Activated CD4-positive, alpha-beta memory T cell treated with anti-CD3 and anti-CD28 coated beads, Interleukin-2, amount 10 ng/mL, durations not matched to agents 7 days and 5 days (primary cell): ENCODE measurements at regions of chr1 and their contacts with region 1.

Region 1: GRCh38 chr1:39799770-39800470 is 11.3 kb upstream of the BMP8B start:
- DNase-seq: peak; percentile 72
- H3K4me3 Mint-ChIP-seq: peak overlapping the region; percentile 63
- H3K27ac Mint-ChIP-seq: peak overlapping the region; percentile 80
- H3K4me1 Mint-ChIP-seq: peaks cover 13% of the 10 kb centered on the region
- H3K27me3 Mint-ChIP-seq: no peaks in the 10 kb centered on the region

Region 2: DNA sequence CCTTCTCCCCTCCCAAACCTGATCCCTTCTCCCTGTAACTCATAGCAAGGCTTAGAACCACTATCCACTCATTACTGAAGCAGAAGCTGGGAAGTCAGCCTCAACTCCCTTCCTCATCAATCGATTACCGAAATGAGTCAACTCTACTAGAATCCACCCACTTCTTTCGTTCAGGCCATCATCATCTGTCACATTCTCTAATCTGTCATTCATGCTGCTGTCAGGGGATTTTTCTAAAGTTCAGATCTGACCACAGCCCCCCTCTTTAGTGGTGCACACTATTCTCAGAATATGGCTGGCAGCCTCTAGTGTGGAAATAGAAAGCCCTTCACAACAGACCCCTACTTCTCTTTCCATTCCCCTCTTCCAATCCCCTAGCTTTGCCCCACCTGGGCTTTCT is 133.1 kb before region 1 on chr1:
- CTCF ChIA-PET with region 1: interaction called, 10 read pairs
- POLR2A ChIA-PET with region 1: no interaction called
- DNase-seq: peak; percentile 25
- H3K4me3 Mint-ChIP-seq: no peak overlapping the region
- H3K27ac Mint-ChIP-seq: peak overlapping the region; percentile 4
- H3K4me1 Mint-ChIP-seq: peaks cover 21% of the 10 kb centered on the region
- H3K27me3 Mint-ChIP-seq: peaks cover 19% of the 10 kb centered on the region

Region 3: DNA sequence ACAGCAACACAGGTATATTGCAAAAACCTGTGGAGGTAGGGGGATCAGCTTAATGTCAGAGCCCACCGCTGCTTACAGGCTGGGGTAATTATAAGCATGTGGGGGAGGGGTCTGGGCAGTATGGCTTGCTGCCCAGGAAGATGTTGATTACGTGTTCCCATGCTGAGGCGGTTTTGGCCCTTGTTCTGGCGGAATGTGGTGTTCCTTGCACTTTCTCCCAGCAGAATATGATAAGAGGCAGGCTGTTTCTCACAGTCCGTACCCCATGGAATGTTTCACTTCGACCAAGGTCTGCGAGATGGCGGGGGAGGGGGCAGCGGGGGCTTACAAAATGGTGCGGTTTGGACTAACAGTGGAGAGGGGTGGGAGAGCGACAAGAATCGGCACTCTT is 98.9 kb before region 1 on chr1:
- CTCF ChIA-PET with region 1: interaction called, 33 read pairs
- POLR2A ChIA-PET with region 1: no interaction called
- DNase-seq: no peak
- H3K4me3 Mint-ChIP-seq: no peak overlapping the region
- H3K27ac Mint-ChIP-seq: no peak overlapping the region
- H3K4me1 Mint-ChIP-seq: no peaks in the 10 kb centered on the region
- H3K27me3 Mint-ChIP-seq: peaks cover 26% of the 10 kb centered on the region

Region 4: GRCh38 chr1:39738622-39739366 is 61.1 kb before region 1 on chr1 and contains the start of gene PPIE:
- CTCF ChIA-PET with region 1: interaction called, 30 read pairs
- POLR2A ChIA-PET with region 1: interaction called, 19 read pairs
- DNase-seq: peak; percentile 96
- H3K4me3 Mint-ChIP-seq: peak within 1 kb of the TSS; percentile 94
- H3K27ac Mint-ChIP-seq: peak within 1 kb of the TSS; percentile 84
- H3K4me1 Mint-ChIP-seq: peaks cover 43% of the 10 kb centered on the region
- H3K27me3 Mint-ChIP-seq: peaks cover 2% of the 10 kb centered on the region
- total RNA-seq, gene PPIE: 52.3 to 57.4 TPM

Region 5: DNA sequence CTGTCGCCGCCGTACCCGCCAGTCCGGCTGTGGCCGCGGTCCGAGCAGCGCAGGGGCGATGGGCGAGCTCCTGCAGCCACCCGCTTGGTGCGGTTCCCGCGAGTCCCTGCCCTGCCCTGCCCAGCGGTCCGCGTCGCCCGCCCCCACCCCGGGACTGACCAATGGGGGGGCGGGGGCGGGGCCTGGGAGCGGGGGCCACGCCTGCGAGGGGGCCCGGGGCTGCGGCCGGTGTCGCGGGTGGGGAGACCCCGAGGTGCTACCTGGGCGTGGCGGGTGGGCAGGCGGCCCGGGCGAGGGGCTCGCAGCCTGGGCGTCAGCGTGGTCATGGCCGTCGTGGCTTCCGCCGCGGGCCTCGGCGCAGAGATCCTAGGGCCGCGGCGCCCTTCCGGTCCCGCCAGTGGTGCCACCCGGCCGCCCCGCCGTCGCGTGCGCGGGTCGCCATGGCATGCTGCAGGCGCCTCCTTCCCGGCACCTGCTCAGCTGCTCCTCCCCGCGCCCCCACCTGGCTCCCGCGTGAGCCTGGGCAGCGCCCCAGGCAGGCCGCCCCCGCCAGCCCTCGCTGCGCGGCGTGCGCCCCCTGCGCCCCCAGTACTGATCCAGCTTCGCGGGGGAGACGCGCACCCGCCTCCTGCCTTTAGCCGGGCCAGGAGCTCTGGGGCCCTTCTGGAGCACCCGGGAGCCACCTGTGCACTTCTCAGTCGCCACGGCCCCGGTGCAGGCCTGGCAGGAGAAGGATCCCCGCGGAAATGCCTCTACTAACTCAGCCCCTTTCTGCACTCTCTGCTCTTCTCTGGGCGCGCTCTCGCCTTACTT is 11.0 kb before region 1 on chr1 and contains the start of gene BMP8B:
- CTCF ChIA-PET with region 1: interaction called, 21 read pairs
- POLR2A ChIA-PET with region 1: interaction called, 12 read pairs
- DNase-seq: peak; percentile 53
- H3K4me3 Mint-ChIP-seq: peak within 1 kb of the TSS; percentile 73
- H3K27ac Mint-ChIP-seq: no peak within 1 kb of the TSS
- H3K4me1 Mint-ChIP-seq: peaks cover 12% of the 10 kb centered on the region
- H3K27me3 Mint-ChIP-seq: peaks cover 25% of the 10 kb centered on the region
- total RNA-seq, gene BMP8B: 0.60 to 0.65 TPM